K562 (cell line): ENCODE measurements at regions of chr6 and their contacts with region 1.

Region 1: DNA sequence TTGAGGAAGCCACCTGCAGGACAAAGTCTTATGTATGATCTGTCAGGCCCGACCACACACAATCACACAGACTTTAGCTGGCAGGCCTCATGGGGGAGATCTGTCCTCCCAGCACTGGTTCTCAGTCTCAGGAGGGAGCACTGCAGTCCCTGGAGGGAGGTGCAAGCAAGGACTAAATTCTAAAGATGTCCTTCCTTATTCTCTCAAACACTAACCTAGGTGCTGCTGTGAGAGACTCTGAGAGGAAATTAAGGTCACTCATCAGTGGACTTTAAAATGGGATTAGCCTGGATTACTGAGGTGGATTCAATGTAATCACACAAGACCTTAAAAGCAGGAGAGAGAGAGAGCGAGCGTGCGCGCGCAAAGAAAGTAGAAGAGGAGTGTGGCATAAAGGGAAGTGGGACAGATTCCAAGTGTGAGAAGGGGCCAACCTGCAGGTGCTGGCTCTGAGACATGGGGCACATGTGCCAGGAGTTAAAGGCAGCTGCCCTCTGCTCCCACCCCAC is 14.3 kb downstream of the GLO1 start:
- DNase-seq: no peak
- ATAC-seq: peak; percentile 73
- H3K4me3 ChIP-seq: no peak overlapping the region
- H3K27ac ChIP-seq: no peak overlapping the region
- H3K4me1 ChIP-seq: no peaks in the 10 kb centered on the region
- H3K27me3 ChIP-seq: no peaks in the 10 kb centered on the region
- CTCF ChIP-seq: no peak
- EP300 ChIP-seq: no peak
- POLR2A ChIP-seq: no peak
- RAD21 ChIP-seq: no peak

Region 2: GRCh38 chr6:38483526-38483925 is 205.1 kb before region 1 on chr6:
- CTCF ChIA-PET with region 1: no interaction called
- POLR2A ChIA-PET with region 1: no interaction called
- in situ Hi-C with region 1: no loop called
- intact Hi-C with region 1: no loop called
- DNase-seq: no peak
- ATAC-seq: no peak
- H3K4me3 ChIP-seq: no peak overlapping the region
- H3K27ac ChIP-seq: no peak overlapping the region
- H3K4me1 ChIP-seq: no peaks in the 10 kb centered on the region
- H3K27me3 ChIP-seq: peaks cover 4 to 15% of the 10 kb centered on the region in 2 experiments; a peak in 4 of 5 replicates
- CTCF ChIP-seq: no peak
- EP300 ChIP-seq: no peak
- POLR2A ChIP-seq: no peak
- RAD21 ChIP-seq: no peak

Region 3: DNA sequence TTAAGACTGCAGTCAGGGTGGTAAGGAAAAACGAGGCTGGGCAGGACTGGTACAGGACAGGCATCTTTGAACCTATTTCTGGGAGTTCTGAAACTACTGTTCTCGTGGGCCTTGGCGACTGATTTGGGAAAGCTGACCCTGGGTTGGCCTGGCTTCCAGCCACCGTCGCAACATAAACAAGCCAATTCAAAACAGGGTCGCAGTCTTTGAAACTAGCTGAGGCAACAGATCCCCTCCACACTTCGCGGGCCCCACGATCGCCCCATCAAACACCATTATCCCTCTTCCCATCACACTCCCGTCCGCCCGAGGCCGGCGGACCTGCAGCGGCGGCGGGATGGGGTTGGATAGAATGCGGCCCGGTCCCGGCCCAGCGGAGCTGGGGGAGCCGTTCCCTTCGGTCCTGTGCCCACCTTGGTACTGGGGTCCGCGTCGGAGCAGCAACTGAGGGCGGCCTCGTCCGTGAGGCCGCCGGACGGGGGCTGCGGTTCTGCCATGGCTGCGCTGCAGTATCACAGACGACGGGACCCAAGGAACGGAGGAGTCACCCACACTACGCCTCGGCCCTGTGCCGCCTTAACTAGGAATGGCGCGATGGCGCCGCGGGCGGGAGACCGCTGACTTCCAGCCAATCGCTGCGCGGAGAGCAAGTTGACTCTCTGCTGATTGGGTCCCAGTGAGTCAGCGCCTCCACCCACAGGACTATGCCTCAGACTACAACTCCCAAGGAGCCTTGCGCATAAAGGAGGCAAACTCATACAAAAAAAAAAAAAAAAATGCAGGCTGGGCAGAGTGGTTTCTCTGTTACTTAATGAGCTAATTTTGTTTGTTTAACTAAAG is 14.1 kb after region 1 on chr6 and contains the start of gene GLO1:
- CTCF ChIA-PET with region 1: no interaction called
- POLR2A ChIA-PET with region 1: interaction called, 15 read pairs
- in situ Hi-C with region 1: no loop called
- intact Hi-C with region 1: no loop called
- DNase-seq: peak; percentile 100
- ATAC-seq: peak; percentile 100
- H3K4me3 ChIP-seq: peak within 1 kb of the TSS; percentile 70
- H3K27ac ChIP-seq: peak within 1 kb of the TSS; percentile 84
- H3K4me1 ChIP-seq: peaks cover 13 to 16% of the 10 kb centered on the region in 2 experiments
- H3K27me3 ChIP-seq: no peaks in the 10 kb centered on the region; a peak in 1 of 5 replicates
- CTCF ChIP-seq: no peak
- EP300 ChIP-seq: no peak
- POLR2A ChIP-seq: peak; percentile 97
- RAD21 ChIP-seq: no peak
- polyA plus RNA-seq, gene GLO1: 155 to 203 TPM

Region 4: DNA sequence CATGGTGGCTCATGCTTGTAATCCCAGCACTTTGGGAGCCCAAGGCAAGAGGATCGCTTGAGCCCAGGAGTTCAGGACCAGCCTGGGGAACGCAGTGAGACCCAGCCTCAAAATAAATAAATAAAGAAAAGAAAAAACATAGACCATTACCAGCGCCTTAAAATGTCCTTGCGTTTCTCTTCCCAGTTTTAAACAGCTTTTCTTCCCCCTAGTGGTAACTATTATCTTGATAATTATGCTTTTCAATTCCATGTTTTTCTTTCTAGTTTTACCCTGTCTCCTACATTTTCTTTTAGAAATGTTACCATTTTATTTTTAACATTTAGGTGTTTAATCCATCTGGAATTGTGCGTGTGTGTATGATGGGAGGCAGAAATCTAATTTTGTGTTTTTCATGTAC is 50.9 kb after region 1 on chr6:
- CTCF ChIA-PET with region 1: no interaction called
- POLR2A ChIA-PET with region 1: no interaction called
- in situ Hi-C with region 1: no loop called
- intact Hi-C with region 1: no loop called
- DNase-seq: no peak
- ATAC-seq: no peak
- H3K4me3 ChIP-seq: no peak overlapping the region
- H3K27ac ChIP-seq: no peak overlapping the region
- H3K4me1 ChIP-seq: no peaks in the 10 kb centered on the region
- H3K27me3 ChIP-seq: no peaks in the 10 kb centered on the region
- CTCF ChIP-seq: peak in 2 of 3 experiments; percentile 27 to 28; a peak in 4 of 6 replicates
- EP300 ChIP-seq: no peak
- POLR2A ChIP-seq: no peak
- RAD21 ChIP-seq: peak in 1 of 2 experiments; percentile 32; a peak in 1 of 4 replicates